GM12878 (cell line): ENCODE measurements at regions of chr4 and their contacts with region 1.

Region 1: DNA sequence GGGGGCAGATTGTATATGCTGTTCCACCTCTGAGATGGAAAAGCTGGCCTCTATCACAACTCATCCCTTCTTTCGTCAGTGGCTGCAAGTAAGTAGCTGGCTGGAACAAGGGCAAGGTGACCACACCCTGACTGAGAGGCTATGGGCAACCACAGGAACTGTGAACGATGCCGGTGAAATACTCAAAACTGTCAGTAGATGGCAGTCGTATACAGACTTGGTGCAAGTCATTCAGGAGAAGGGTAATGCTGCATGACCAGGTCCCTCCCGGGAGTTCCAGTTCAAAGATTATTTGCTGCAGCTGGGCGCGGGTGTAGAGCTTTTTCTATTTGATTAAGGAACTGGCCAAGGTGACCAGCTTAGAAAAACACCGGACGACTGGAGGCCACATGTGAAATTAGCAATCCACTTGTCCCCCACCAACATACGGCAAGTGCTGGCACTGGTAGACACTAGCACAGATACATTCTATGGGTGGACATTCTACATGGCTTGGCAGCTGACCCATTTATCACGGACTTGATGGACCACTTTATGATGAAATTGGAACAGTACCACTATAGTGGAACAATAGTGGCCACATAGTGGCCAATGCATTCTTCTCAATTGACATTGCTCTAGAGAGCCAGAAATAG is 726.7 kb downstream of the TRAM1L1 start:
- DNase-seq: peak; percentile 44
- ATAC-seq: peak; percentile 98
- H3K4me3 ChIP-seq: no peak overlapping the region
- H3K27ac ChIP-seq: no peak overlapping the region
- H3K4me1 ChIP-seq: no peaks in the 10 kb centered on the region
- H3K27me3 ChIP-seq: no peaks in the 10 kb centered on the region
- CTCF ChIP-seq: peak; percentile 73 to 80 (median 75)
- EP300 ChIP-seq: no peak
- POLR2A ChIP-seq: no peak
- RAD21 ChIP-seq: peak; percentile 93

Region 2: DNA sequence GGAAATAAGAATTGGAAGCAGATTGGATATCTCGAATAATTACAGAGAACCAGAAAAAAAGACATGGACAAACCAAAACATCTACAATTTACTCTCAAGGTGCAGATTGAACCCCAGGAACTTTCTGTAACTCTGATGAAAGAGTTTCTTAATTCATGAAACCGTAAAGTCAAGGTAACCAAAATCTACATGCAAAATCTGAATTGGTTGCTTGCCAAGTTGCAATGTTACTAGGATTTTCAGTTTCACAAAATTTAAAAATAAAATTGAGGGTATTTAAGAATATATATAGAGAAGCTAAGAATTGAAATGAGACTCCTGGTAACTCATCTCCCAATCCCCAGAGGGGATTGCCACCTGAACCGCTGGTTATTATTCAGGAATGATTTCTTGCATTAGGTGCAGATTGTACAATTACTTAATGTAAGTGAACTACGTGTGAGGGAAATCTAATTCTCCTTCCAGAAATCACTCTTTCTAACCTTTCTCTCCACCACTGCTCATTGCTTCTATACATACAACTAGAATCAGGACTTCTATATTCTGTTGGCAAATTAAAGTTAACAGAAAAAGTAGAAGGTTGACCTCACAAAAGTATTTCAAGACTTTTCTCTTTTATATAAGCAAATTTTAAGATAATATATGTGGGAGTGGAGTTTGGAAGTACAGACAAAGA is 1023.8 kb before region 1 on chr4:
- CTCF ChIA-PET with region 1: no interaction called
- POLR2A ChIA-PET with region 1: no interaction called
- RAD21 ChIA-PET with region 1: no interaction called
- SMC1A ChIA-PET with region 1: no interaction called
- in situ Hi-C with region 1: no loop called
- intact Hi-C with region 1: no loop called
- DNase-seq: peak; percentile 34
- ATAC-seq: peak; percentile 73
- H3K4me3 ChIP-seq: no peak overlapping the region
- H3K27ac ChIP-seq: no peak overlapping the region
- H3K4me1 ChIP-seq: peaks cover 9% of the 10 kb centered on the region; the same call in 1 of the 2 replicates
- H3K27me3 ChIP-seq: no peaks in the 10 kb centered on the region
- CTCF ChIP-seq: no peak
- EP300 ChIP-seq: no peak; a peak in 1 of 4 replicates
- POLR2A ChIP-seq: no peak
- RAD21 ChIP-seq: no peak

Region 3: DNA sequence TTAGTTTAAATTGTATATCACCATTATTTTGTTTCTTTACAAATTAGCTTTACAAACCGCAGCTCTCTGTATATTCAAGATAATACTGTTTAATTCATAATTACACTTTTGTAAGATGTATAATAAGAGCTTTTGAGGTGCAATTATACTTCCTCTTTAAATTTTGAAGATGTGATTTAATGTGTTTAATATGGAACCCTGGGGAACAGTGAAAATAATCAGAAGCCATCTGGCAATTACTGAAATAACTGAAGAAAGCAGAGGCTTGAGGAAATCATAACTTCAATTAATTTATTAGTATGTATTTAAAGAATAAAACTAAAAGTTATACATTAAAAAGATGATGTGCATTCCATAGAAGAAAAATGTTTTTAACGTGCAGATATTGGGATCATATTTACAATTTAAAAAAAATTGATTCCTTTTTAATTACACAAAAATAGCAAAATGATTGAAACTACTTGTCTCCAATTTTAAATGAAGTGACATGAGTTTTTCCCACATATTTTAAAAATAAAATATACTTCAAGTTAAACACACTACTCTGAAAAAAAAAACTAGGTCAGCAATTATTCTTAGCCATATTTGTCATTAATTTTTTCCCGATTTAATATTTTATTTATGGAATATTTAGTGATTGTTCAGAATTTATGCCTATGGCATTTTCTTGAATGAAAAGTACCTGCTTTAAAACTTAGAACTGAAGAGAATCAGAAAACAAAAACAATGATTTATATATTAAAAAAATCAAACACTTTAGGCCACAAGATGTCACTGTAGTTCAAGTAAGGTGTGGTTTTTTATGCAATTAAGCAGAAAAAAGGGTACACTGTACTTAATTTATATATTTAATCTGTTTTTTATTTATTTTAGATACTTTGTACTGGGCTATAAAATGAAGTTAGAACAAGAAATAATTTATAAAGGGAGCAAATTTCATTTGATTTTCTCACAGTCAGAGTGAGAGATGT is 302.6 kb before region 1 on chr4:
- CTCF ChIA-PET with region 1: no interaction called
- POLR2A ChIA-PET with region 1: no interaction called
- RAD21 ChIA-PET with region 1: no interaction called
- SMC1A ChIA-PET with region 1: no interaction called
- in situ Hi-C with region 1: no loop called
- intact Hi-C with region 1: loop called (anchors 5 kb)
- DNase-seq: no peak
- ATAC-seq: no peak
- H3K4me3 ChIP-seq: no peak overlapping the region
- H3K27ac ChIP-seq: no peak overlapping the region
- H3K4me1 ChIP-seq: no peaks in the 10 kb centered on the region
- H3K27me3 ChIP-seq: no peaks in the 10 kb centered on the region
- CTCF ChIP-seq: no peak; a peak in 1 of 6 replicates
- EP300 ChIP-seq: no peak
- POLR2A ChIP-seq: no peak
- RAD21 ChIP-seq: no peak

Region 4: GRCh38 chr4:116180157-116180601 is 178.5 kb before region 1 on chr4:
- CTCF ChIA-PET with region 1: interaction called, 3 read pairs
- POLR2A ChIA-PET with region 1: no interaction called
- RAD21 ChIA-PET with region 1: interaction called, 3 read pairs
- SMC1A ChIA-PET with region 1: interaction called, 4 read pairs
- in situ Hi-C with region 1: no loop called
- intact Hi-C with region 1: loop called (anchors 5 kb)
- DNase-seq: no peak
- ATAC-seq: peak; percentile 68
- H3K4me3 ChIP-seq: no peak overlapping the region
- H3K27ac ChIP-seq: no peak overlapping the region
- H3K4me1 ChIP-seq: no peaks in the 10 kb centered on the region
- H3K27me3 ChIP-seq: no peaks in the 10 kb centered on the region
- CTCF ChIP-seq: peak; percentile 38 to 51 (median 40); a peak in 4 of 6 replicates
- EP300 ChIP-seq: no peak
- POLR2A ChIP-seq: no peak
- RAD21 ChIP-seq: peak; percentile 66

Region 5: GRCh38 chr4:116374815-116375214 is 16.1 kb after region 1 on chr4:
- CTCF ChIA-PET with region 1: interaction called, 13 read pairs
- POLR2A ChIA-PET with region 1: no interaction called
- RAD21 ChIA-PET with region 1: interaction called, 6 read pairs
- SMC1A ChIA-PET with region 1: interaction called, 6 read pairs
- in situ Hi-C with region 1: no loop called
- intact Hi-C with region 1: no loop called
- DNase-seq: no peak
- ATAC-seq: peak; percentile 75
- H3K4me3 ChIP-seq: no peak overlapping the region
- H3K27ac ChIP-seq: no peak overlapping the region
- H3K4me1 ChIP-seq: no peaks in the 10 kb centered on the region
- H3K27me3 ChIP-seq: no peaks in the 10 kb centered on the region
- CTCF ChIP-seq: no peak
- EP300 ChIP-seq: no peak
- POLR2A ChIP-seq: no peak
- RAD21 ChIP-seq: no peak

Region 6: DNA sequence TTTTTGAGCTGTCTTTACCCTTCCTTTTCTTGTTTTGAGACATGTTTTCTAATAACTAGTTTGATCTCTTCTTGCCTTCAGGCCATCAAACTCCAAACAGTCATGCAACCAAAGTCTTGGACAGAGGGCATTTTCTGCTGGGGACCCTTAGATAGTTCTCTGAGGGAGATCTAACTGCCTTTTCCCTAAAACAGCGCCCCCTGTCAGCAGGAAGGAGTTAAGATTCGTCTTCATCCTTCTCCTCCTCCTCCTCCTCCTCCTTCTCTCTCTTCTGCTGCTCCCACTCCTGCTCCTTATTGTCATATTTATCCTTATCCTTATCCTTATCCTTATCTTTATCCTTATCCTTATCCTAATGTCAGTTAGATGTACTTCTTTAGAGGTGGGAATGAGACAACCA is 309.5 kb after region 1 on chr4:
- CTCF ChIA-PET with region 1: interaction called, 8 read pairs
- POLR2A ChIA-PET with region 1: no interaction called
- RAD21 ChIA-PET with region 1: interaction called, 3 read pairs
- SMC1A ChIA-PET with region 1: interaction called, 4 read pairs
- in situ Hi-C with region 1: loop called (anchors 25 kb)
- intact Hi-C with region 1: loop called (anchors 1 kb)
- DNase-seq: no peak
- ATAC-seq: peak; percentile 44; the same call in 1 of the 3 replicates
- H3K4me3 ChIP-seq: no peak overlapping the region
- H3K27ac ChIP-seq: no peak overlapping the region
- H3K4me1 ChIP-seq: no peaks in the 10 kb centered on the region
- H3K27me3 ChIP-seq: no peaks in the 10 kb centered on the region
- CTCF ChIP-seq: peak; percentile 20 to 41 (median 22); a peak in 5 of 6 replicates
- EP300 ChIP-seq: no peak
- POLR2A ChIP-seq: no peak
- RAD21 ChIP-seq: peak; percentile 18; the same call in 1 of the 2 replicates

Region 7: GRCh38 chr4:118224239-118224829 is 1865.6 kb after region 1 on chr4:
- CTCF ChIA-PET with region 1: interaction called, 3 read pairs
- POLR2A ChIA-PET with region 1: no interaction called
- RAD21 ChIA-PET with region 1: no interaction called
- SMC1A ChIA-PET with region 1: no interaction called
- in situ Hi-C with region 1: no loop called
- intact Hi-C with region 1: loop called (anchors 5 kb)
- DNase-seq: no peak
- ATAC-seq: peak; percentile 71
- H3K4me3 ChIP-seq: no peak overlapping the region
- H3K27ac ChIP-seq: no peak overlapping the region
- H3K4me1 ChIP-seq: no peaks in the 10 kb centered on the region
- H3K27me3 ChIP-seq: no peaks in the 10 kb centered on the region; a peak in 1 of 4 replicates
- CTCF ChIP-seq: peak; percentile 35 to 69 (median 50); a peak in 4 of 6 replicates
- EP300 ChIP-seq: no peak
- POLR2A ChIP-seq: no peak
- RAD21 ChIP-seq: peak; percentile 69

Region 8: DNA sequence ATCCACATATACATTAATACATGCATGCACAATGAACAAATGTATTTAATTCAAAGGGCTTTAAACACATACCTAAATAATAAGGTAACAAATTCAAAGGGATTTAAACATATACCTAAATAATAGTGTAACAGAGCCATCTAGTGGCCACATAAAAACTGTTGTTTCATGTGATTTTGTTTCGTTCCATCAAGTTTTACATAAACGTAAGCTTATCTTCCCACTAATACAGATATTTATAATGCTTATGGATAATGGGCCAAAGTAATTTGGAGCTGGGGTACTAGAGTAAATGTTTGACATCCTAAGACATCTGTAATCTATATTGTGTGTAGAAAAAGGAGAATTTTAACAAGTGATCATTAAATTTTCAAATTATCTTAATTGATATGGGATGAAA is 1911.8 kb after region 1 on chr4:
- CTCF ChIA-PET with region 1: interaction called, 3 read pairs
- POLR2A ChIA-PET with region 1: no interaction called
- RAD21 ChIA-PET with region 1: no interaction called
- SMC1A ChIA-PET with region 1: no interaction called
- in situ Hi-C with region 1: loop called (anchors 25 kb)
- intact Hi-C with region 1: no loop called
- DNase-seq: no peak
- ATAC-seq: peak; percentile 73
- H3K4me3 ChIP-seq: no peak overlapping the region
- H3K27ac ChIP-seq: no peak overlapping the region
- H3K4me1 ChIP-seq: no peaks in the 10 kb centered on the region
- H3K27me3 ChIP-seq: no peaks in the 10 kb centered on the region
- CTCF ChIP-seq: peak; percentile 30 to 61 (median 59); a peak in 4 of 6 replicates
- EP300 ChIP-seq: no peak
- POLR2A ChIP-seq: no peak
- RAD21 ChIP-seq: peak; percentile 55